Natural killer cell (primary cell): ENCODE measurements at regions of chr1 and their contacts with region 1.

Region 1: GRCh38 chr1:28926629-28927265 is 12.4 kb downstream of the EPB41 start:
- DNase-seq: peak in 1 of 2 donors; percentile 89
- ATAC-seq: peak; percentile 85 to 94 (median 91)
- H3K4me3 ChIP-seq: peak overlapping the region; percentile 20
- H3K4me3 Mint-ChIP-seq: peak overlapping the region; percentile 87
- H3K27ac ChIP-seq: peak overlapping the region; percentile 80
- H3K27ac Mint-ChIP-seq: peak overlapping the region; percentile 89 to 98
- H3K4me1 ChIP-seq: peaks cover 58% of the 10 kb centered on the region
- H3K4me1 Mint-ChIP-seq: peaks cover 44 to 49% of the 10 kb centered on the region in 2 donors
- H3K27me3 ChIP-seq: no peaks in the 10 kb centered on the region
- H3K27me3 Mint-ChIP-seq: no peaks in the 10 kb centered on the region
- CTCF ChIP-seq: no peak

Region 2: GRCh38 chr1:28602536-28603439 is 324.0 kb before region 1 on chr1:
- intact Hi-C with region 1: no loop called
- DNase-seq: peak in 1 of 2 donors; percentile 63
- ATAC-seq: no peak
- H3K4me3 ChIP-seq: no peak overlapping the region
- H3K4me3 Mint-ChIP-seq: no peak overlapping the region
- H3K27ac ChIP-seq: no peak overlapping the region
- H3K27ac Mint-ChIP-seq: peak overlapping the region in 1 of 2 donors; percentile 33
- H3K4me1 ChIP-seq: no peaks in the 10 kb centered on the region
- H3K4me1 Mint-ChIP-seq: no peaks in the 10 kb centered on the region
- H3K27me3 ChIP-seq: no peaks in the 10 kb centered on the region
- H3K27me3 Mint-ChIP-seq: no peaks in the 10 kb centered on the region
- CTCF ChIP-seq: no peak

Region 3: DNA sequence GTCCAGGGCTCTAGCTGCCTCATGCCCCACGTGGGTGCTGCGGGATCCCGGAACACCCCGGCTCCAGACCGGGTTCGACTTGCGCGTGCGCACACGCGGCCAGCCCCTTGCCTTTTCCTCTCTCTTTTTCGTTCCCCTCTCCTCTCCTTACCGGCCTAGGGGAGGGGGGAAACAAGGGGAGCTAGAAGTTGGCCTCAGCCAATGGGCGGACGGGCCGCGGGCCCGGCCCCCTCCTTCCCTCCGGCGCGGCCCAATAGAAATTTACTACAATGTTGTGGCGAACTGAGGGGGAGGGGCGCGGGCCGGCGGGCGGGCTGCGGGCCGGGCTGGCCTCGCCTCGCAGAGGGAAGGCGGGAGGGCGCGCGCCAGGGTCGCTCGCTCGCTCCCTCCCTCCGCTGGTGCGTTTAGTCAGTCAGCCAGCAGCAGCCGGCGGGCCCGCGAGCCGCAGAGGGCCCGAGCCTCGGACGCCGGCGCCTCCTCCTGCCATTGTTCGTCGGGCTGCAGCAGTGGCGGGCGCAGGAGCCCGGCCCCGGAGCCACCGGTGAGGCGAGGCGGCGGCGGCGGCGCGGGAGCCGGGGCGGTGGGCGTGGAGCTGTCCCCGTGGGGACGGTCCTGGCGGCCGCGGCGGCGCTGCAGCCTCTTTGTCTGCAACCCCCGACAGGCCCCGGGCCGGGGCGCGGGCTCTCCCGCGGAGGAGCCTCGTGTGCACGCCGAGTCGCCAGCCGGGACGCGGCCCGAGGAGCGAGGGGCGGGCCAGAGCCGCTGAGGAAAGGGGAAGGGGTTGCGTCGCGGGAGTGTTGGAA is 12.3 kb before region 1 on chr1 and contains the start of gene EPB41:
- intact Hi-C with region 1: loop called (anchors 1 kb)
- DNase-seq: peak; percentile 89 to 93
- ATAC-seq: peak; percentile 89 to 95 (median 91)
- H3K4me3 ChIP-seq: peak within 1 kb of the TSS; percentile 97
- H3K4me3 Mint-ChIP-seq: peak within 1 kb of the TSS; percentile 93
- H3K27ac ChIP-seq: peak within 1 kb of the TSS; percentile 64
- H3K27ac Mint-ChIP-seq: peak within 1 kb of the TSS; percentile 86 to 90
- H3K4me1 ChIP-seq: peaks cover 36% of the 10 kb centered on the region
- H3K4me1 Mint-ChIP-seq: peaks cover 44 to 47% of the 10 kb centered on the region in 2 donors
- H3K27me3 ChIP-seq: no peaks in the 10 kb centered on the region
- H3K27me3 Mint-ChIP-seq: no peaks in the 10 kb centered on the region
- CTCF ChIP-seq: no peak
- total RNA-seq, gene EPB41: 151 to 196 (median 172) TPM

Region 4: DNA sequence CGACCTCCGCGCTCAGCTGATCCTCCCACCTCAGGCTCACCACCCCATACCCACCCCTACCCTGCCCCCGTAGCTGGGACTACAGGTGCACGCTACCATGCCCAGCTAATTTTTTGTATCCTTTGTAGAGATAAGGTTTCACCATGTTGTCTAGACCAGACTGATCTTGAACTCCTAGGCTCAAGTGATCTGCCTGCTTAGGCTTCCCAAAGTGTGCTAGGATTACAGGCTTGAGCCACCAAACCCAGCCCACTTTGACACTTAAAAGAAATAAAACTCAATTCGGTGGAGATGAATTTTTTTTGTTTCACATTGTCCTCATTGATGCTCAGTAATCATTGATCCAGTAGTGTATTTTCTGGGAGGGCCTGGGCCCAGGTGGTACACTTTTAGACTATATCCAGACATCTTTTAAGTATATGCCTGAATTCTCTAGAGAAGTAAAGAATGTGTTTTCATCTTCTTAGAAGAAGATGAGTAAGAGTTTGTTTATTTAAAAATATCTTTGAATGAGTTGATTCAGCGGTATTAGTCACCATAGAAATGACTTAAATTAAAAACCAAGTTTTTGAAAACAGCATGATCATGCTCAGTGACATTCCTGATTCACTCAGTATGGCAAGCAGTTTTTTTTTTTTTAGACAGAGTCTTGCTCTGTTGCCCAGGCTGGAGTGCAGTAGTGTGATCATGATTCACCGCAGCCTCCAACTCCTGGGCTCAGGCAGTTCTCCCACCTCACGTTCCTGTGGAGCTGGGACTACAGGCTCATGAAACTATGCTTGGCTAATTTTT is 45.4 kb after region 1 on chr1:
- intact Hi-C with region 1: loop called (anchors 10 kb)
- DNase-seq: no peak
- ATAC-seq: no peak
- H3K4me3 ChIP-seq: no peak overlapping the region
- H3K4me3 Mint-ChIP-seq: no peak overlapping the region
- H3K27ac ChIP-seq: no peak overlapping the region
- H3K27ac Mint-ChIP-seq: peak overlapping the region; percentile 18 to 41
- H3K4me1 ChIP-seq: no peaks in the 10 kb centered on the region
- H3K4me1 Mint-ChIP-seq: peaks cover 45% of the 10 kb centered on the region in 2 donors
- H3K27me3 ChIP-seq: no peaks in the 10 kb centered on the region
- H3K27me3 Mint-ChIP-seq: no peaks in the 10 kb centered on the region
- CTCF ChIP-seq: no peak

Region 5: DNA sequence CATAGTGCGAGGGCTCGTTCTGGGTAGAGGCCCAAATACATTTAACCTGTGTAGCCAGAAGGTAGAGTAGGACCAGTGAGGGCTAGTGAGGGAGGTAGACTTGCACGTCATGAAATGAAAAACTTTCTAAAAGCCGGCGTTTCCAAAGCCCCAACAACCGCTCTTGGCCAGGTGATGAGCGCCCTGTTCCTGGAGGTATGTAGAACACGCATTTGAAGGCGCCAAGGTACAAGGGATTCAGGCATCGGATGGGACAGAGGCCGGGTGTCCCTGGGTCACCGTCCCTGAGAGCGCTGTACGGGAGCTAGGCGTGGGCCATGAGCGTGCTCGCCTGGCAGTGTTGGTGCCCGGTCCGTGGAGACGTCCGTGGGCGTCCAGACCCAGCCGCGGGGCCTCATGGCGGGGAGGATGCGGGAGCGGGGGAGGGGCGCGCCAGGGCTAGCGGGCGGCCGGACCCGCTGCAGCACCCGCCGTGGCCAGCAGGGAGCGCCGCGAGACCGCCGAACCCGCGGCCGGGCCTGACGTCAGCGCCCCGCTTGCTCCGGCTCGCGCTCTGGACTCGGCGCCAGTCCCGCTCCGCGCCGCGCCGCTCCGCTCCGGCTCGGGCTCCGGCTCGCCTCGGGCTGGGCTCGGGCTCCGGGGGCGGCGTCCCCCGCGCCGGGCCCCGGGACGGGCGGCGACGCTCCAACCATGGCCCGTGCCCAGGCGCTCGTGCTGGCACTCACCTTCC is 309.4 kb after region 1 on chr1 and contains the start of gene PTPRU:
- intact Hi-C with region 1: no loop called
- DNase-seq: peak; percentile 87
- ATAC-seq: peak; percentile 94 to 96 (median 94)
- H3K4me3 ChIP-seq: peak within 1 kb of the TSS; percentile 1
- H3K4me3 Mint-ChIP-seq: peak within 1 kb of the TSS; percentile 82
- H3K27ac ChIP-seq: no peak within 1 kb of the TSS
- H3K27ac Mint-ChIP-seq: peak within 1 kb of the TSS in 1 of 2 donors; percentile 64
- H3K4me1 ChIP-seq: peaks cover 20% of the 10 kb centered on the region
- H3K4me1 Mint-ChIP-seq: peaks cover 22 to 27% of the 10 kb centered on the region in 2 donors
- H3K27me3 ChIP-seq: peaks cover 37% of the 10 kb centered on the region
- H3K27me3 Mint-ChIP-seq: peaks cover 52% of the 10 kb centered on the region in 2 donors
- CTCF ChIP-seq: peak; percentile 66
- total RNA-seq, gene PTPRU: 0.54 to 1.6 (median 0.79) TPM